ENCODE measurements at regions of chr1 and their contacts with region 1.

Region 1: DNA sequence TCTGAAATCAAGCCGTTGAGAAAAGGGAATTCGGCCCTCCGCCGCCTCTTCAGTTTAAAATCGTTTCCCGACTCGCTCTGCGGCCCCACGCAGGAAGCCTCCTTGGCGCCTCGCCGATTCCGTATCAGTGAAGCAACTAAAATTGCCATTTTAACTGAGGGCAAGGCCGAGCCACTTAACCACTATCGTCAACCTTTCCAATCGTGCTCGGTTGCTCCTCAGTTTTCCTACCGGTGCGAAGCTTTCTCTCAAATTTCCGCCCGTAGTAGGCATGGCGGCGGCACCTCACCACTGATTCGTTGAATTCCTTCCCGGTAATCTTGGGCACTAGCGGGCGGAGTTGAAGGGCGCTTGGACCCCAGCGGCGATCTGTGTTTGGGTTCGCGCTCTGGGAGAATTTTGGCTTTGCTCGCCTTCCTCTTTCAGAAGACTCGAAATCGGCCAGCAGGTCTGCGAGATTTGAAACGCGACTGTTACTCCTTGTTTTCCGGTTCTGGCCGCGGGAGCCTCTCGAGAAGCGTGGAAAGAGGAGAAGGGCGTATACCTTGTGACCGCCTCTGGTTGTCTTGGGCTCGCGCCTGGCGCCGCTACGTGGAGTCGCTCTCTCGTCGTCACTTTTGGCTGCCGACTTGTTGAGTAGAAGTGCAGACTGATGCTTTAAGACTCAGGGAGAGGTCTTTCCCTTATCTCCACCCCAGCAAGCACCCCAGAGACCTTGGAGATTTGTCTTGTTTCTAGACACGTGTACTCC is at the starts of genes CENPL and DARS2:
- DNase-seq: peak; percentile 80 to 97 (median 86)
- ATAC-seq: peak; percentile 87
- H3K4me3 ChIP-seq: peak within 1 kb of the TSS; percentile 94
- H3K4me3 Mint-ChIP-seq: peak within 1 kb of the TSS; percentile 96
- H3K27ac ChIP-seq: peak within 1 kb of the TSS; percentile 77 to 92
- H3K27ac Mint-ChIP-seq: peak within 1 kb of the TSS; percentile 89
- H3K4me1 ChIP-seq: peaks cover 26% of the 10 kb centered on the region
- H3K4me1 Mint-ChIP-seq: peaks cover 45% of the 10 kb centered on the region
- H3K27me3 ChIP-seq: no peaks in the 10 kb centered on the region
- H3K27me3 Mint-ChIP-seq: no peaks in the 10 kb centered on the region
- CTCF ChIP-seq: no peak
- total RNA-seq, gene CENPL: 3.8 to 4.7 TPM
- total RNA-seq, gene DARS2: 1.7 TPM

Region 2: GRCh38 chr1:173420330-173420806 is 404.1 kb before region 1 on chr1:
- CTCF ChIA-PET with region 1: interaction called, 3 read pairs
- POLR2A ChIA-PET with region 1: no interaction called
- intact Hi-C with region 1: loop called in 1 of 2 experiments (anchors 1 kb)
- DNase-seq: peak; percentile 12 to 84 (median 38)
- ATAC-seq: peak; percentile 96
- H3K4me3 ChIP-seq: no peak overlapping the region
- H3K4me3 Mint-ChIP-seq: no peak overlapping the region
- H3K27ac ChIP-seq: no peak overlapping the region
- H3K27ac Mint-ChIP-seq: no peak overlapping the region
- H3K4me1 ChIP-seq: peaks cover 4% of the 10 kb centered on the region
- H3K4me1 Mint-ChIP-seq: peaks cover 7% of the 10 kb centered on the region
- H3K27me3 ChIP-seq: no peaks in the 10 kb centered on the region
- H3K27me3 Mint-ChIP-seq: no peaks in the 10 kb centered on the region
- CTCF ChIP-seq: peak; percentile 91

Region 3: GRCh38 chr1:173476664-173477285 is 347.7 kb before region 1 on chr1:
- CTCF ChIA-PET with region 1: no interaction called
- POLR2A ChIA-PET with region 1: interaction called, 15 read pairs
- intact Hi-C with region 1: loop called in 1 of 2 experiments (anchors 2 kb)
- DNase-seq: peak; percentile 53 to 91 (median 75)
- ATAC-seq: peak; percentile 79
- H3K4me3 ChIP-seq: peak overlapping the region; percentile 84
- H3K4me3 Mint-ChIP-seq: peak overlapping the region; percentile 93
- H3K27ac ChIP-seq: peak overlapping the region; percentile 48 to 89
- H3K27ac Mint-ChIP-seq: peak overlapping the region; percentile 82
- H3K4me1 ChIP-seq: peaks cover 32% of the 10 kb centered on the region
- H3K4me1 Mint-ChIP-seq: peaks cover 72% of the 10 kb centered on the region
- H3K27me3 ChIP-seq: no peaks in the 10 kb centered on the region
- H3K27me3 Mint-ChIP-seq: no peaks in the 10 kb centered on the region
- CTCF ChIP-seq: no peak

Region 4: DNA sequence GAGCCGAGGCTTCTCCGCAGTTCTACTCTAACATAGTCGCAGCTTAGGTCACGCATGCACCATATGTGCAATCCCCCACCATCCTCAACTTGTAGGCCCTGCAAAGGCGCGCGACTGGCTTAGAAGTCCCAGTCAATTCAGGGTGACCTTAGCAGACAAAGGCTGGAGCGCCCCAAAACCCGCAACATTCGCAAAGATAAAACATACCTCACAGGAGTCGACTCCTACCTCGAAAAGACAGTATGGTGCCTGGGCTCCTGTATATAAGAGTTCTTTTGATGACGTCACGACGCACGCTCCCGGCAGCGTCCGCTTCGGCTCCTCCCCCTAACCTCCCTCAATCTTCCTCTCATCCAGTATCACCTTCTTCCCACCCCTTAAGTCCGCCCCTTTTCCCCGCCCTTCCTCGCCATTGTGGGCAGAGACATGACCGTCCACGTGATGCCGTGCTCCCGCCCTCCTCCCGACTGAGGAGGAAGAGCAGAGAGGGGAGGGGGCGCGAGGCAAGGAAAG is 43.3 kb after region 1 on chr1 and contains the start of gene GAS5:
- CTCF ChIA-PET with region 1: interaction called, 5 read pairs
- POLR2A ChIA-PET with region 1: interaction called, 96 read pairs
- intact Hi-C with region 1: loop called (anchors 1 kb)
- DNase-seq: peak; percentile 98 to 100 (median 99)
- ATAC-seq: peak; percentile 79
- H3K4me3 ChIP-seq: peak within 1 kb of the TSS; percentile 90
- H3K4me3 Mint-ChIP-seq: peak within 1 kb of the TSS; percentile 93
- H3K27ac ChIP-seq: peak within 1 kb of the TSS; percentile 96
- H3K27ac Mint-ChIP-seq: peak within 1 kb of the TSS; percentile 95
- H3K4me1 ChIP-seq: peaks cover 59% of the 10 kb centered on the region
- H3K4me1 Mint-ChIP-seq: peaks cover 85% of the 10 kb centered on the region
- H3K27me3 ChIP-seq: no peaks in the 10 kb centered on the region
- H3K27me3 Mint-ChIP-seq: no peaks in the 10 kb centered on the region
- CTCF ChIP-seq: no peak
- total RNA-seq, gene GAS5: 865 to 867 TPM

Region 5: GRCh38 chr1:174159252-174160108 is 335.0 kb after region 1 on chr1 and contains the start of gene RABGAP1L:
- CTCF ChIA-PET with region 1: no interaction called
- POLR2A ChIA-PET with region 1: no interaction called
- intact Hi-C with region 1: loop called in 1 of 2 experiments (anchors 10 kb)
- DNase-seq: peak; percentile 88 to 99 (median 94)
- ATAC-seq: peak; percentile 90
- H3K4me3 ChIP-seq: peak within 1 kb of the TSS; percentile 73
- H3K4me3 Mint-ChIP-seq: peak within 1 kb of the TSS; percentile 96
- H3K27ac ChIP-seq: peak within 1 kb of the TSS; percentile 85 to 95
- H3K27ac Mint-ChIP-seq: peak within 1 kb of the TSS; percentile 92
- H3K4me1 ChIP-seq: peaks cover 20% of the 10 kb centered on the region
- H3K4me1 Mint-ChIP-seq: peaks cover 58% of the 10 kb centered on the region
- H3K27me3 ChIP-seq: no peaks in the 10 kb centered on the region
- H3K27me3 Mint-ChIP-seq: no peaks in the 10 kb centered on the region
- CTCF ChIP-seq: no peak
- total RNA-seq, gene RABGAP1L: 59.8 to 67.6 TPM